ENCODE measurements at regions of chr17 and their contacts with region 1.

Region 1: DNA sequence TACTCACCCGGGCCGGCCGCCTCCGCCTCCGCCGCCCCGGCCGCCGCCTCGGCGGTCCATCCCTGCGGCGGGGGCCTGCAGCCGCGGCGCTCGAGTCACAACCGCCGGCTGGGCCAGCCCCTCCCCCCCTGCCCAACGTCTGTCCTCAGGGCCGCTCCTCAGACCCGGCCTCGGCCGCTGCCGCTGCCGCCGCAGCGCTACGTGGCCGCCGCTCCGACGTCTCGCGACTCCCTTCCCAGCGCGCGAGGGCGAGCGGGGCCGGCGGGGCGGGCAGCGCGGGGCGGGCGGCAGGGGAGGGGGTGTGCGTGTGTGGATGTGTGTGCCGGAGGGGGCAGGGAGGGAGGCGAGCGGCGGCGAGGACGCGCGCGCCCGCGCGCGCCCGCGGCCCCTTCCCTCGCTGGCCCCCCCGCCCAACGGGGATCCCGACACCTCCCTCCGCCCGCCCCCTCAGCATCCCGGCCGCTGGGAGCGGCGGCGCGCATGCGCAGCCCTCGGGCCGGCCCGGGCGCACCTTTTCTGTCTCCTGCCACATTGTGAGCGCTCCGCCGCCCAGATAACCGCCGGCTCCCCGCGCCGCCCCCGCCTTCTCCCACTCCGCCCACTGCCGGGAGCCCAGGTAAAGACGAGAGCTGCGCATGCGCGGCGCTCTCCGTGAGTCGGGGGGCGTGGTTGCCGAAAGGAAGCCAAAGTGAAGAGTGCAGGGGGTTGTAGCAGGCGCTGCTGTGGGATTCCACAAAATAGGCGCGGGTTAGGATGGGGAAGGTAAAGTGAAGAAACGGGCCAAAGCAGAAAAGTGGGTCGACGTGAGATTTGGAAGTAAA is at the start of gene ZNF652:
- DNase-seq: peak; percentile 98
- ATAC-seq: peak; percentile 69
- H3K4me3 ChIP-seq: peak within 1 kb of the TSS; percentile 79 to 95 (median 89)
- H3K4me3 Mint-ChIP-seq: peak within 1 kb of the TSS; percentile 99
- H3K27ac ChIP-seq: peak within 1 kb of the TSS; percentile 70 to 76
- H3K27ac Mint-ChIP-seq: peak within 1 kb of the TSS; percentile 98
- H3K4me1 ChIP-seq: peaks cover 50% of the 10 kb centered on the region in 2 donors
- H3K4me1 Mint-ChIP-seq: peaks cover 62% of the 10 kb centered on the region
- H3K27me3 ChIP-seq: no peaks in the 10 kb centered on the region
- H3K27me3 Mint-ChIP-seq: no peaks in the 10 kb centered on the region
- CTCF ChIP-seq: no peak
- total RNA-seq, gene ZNF652: 82.4 and 86.2 TPM in 2 replicates

Region 2: DNA sequence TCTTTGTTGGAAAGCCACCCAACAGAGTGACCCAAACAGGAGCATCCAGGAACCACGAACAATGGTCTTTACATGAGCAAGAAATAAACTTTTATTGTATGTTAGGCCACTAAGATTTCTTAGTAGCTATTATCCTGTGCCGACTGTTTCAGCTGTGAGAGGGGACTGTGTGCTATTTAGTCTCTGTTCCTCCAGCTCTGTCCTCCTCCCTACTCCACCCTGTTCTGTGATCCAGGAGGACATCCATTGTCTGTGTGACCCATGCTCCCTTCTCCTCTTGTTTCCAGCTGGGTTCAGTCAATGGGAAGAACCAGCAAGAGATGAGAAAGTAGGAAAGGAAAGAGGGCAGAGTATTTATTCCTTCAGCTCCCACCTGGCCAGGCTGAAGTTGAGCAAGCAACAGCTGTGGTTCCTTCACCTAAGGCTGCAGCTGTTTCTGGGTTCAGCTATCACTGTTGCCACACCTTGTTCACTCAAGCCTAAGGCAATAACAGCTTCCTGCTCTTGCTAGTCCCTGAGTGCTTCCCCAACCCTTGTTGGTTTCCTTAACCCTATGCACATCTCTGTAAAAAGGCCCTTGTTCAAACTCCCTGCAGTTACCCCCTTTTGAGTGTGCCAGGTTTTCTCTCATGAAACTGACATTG is 244.4 kb before region 1 on chr17:
- CTCF ChIA-PET with region 1: no interaction called
- POLR2A ChIA-PET with region 1: no interaction called
- intact Hi-C with region 1: no loop called
- DNase-seq: no peak
- ATAC-seq: no peak
- H3K4me3 ChIP-seq: no peak overlapping the region
- H3K4me3 Mint-ChIP-seq: no peak overlapping the region
- H3K27ac ChIP-seq: no peak overlapping the region
- H3K27ac Mint-ChIP-seq: no peak overlapping the region
- H3K4me1 ChIP-seq: no peaks in the 10 kb centered on the region
- H3K4me1 Mint-ChIP-seq: no peaks in the 10 kb centered on the region
- H3K27me3 ChIP-seq: peaks cover 0 to 22% (median 7%) of the 10 kb centered on the region in 4 experiments
- H3K27me3 Mint-ChIP-seq: peaks cover 55% of the 10 kb centered on the region
- CTCF ChIP-seq: no peak

Region 3: DNA sequence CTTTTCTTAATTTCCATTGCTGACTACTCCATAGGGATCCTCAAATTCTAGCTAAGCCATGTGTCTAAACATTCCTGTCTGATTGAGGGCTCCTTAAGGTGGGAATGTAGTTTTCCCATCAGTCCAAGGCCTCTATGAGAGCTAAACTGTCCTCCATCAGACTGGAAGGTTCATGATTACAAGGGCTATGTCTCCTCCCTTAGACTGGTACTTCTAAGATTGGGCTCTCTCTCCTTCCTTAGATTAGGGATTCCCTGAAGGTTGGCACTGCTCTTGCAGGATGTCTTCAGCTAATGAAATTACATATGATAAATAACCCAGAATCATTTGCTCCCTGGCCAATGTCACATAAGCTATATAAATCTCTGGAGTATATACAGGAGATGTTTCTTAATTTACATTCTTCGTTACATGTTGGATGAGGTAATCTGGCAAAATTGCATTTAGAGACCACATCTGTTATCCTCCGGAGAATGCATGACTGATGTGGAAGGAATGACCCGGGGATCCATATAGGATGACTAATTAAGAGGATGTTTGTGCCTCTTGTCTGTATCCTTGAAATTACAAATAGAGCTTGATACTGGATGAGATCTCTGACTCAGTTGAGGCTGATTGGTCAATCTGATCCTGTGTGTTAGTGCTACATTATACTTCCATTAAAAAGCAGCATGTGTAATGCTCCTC is 215.3 kb before region 1 on chr17:
- CTCF ChIA-PET with region 1: no interaction called
- POLR2A ChIA-PET with region 1: no interaction called
- intact Hi-C with region 1: no loop called
- DNase-seq: no peak
- ATAC-seq: no peak
- H3K4me3 ChIP-seq: no peak overlapping the region
- H3K4me3 Mint-ChIP-seq: no peak overlapping the region
- H3K27ac ChIP-seq: no peak overlapping the region
- H3K27ac Mint-ChIP-seq: no peak overlapping the region
- H3K4me1 ChIP-seq: no peaks in the 10 kb centered on the region
- H3K4me1 Mint-ChIP-seq: no peaks in the 10 kb centered on the region
- H3K27me3 ChIP-seq: peaks cover 0 to 12% (median 4%) of the 10 kb centered on the region in 4 experiments
- H3K27me3 Mint-ChIP-seq: peaks cover 28% of the 10 kb centered on the region
- CTCF ChIP-seq: no peak

Region 4: GRCh38 chr17:49343273-49343672 is 18.8 kb before region 1 on chr17:
- CTCF ChIA-PET with region 1: interaction called, 7 read pairs
- POLR2A ChIA-PET with region 1: interaction called, 15 read pairs
- intact Hi-C with region 1: loop called (anchors 1 kb)
- DNase-seq: peak; percentile 30
- ATAC-seq: peak; percentile 24
- H3K4me3 ChIP-seq: no peak overlapping the region
- H3K4me3 Mint-ChIP-seq: peak overlapping the region; percentile 79
- H3K27ac ChIP-seq: peak overlapping the region in 1 of 2 donors; percentile 84
- H3K27ac Mint-ChIP-seq: peak overlapping the region; percentile 47
- H3K4me1 ChIP-seq: peaks cover 31 to 41% of the 10 kb centered on the region in 2 donors
- H3K4me1 Mint-ChIP-seq: peaks cover 54% of the 10 kb centered on the region
- H3K27me3 ChIP-seq: no peaks in the 10 kb centered on the region
- H3K27me3 Mint-ChIP-seq: no peaks in the 10 kb centered on the region
- CTCF ChIP-seq: no peak

Region 5: DNA sequence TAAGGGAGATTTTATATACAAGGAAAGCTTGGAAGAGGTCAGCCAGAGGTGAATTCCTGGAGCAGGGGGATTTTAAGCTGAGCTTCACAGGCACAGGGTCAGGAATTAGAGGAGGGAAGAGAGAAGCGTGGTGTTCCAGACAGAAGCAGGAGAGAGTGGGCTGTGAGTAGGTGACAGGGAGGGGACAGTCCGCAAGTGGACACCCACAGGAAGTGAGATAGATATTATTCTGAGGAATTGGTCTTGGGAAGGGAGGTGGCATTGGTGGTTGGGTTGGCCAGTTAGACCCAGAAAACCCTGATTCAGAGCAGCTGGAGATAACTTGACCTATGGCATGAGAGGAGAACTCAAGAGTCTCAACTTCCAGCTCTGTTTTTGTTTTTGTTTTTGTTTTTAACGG is 37.9 kb after region 1 on chr17:
- CTCF ChIA-PET with region 1: interaction called, 41 read pairs
- POLR2A ChIA-PET with region 1: interaction called, 3 read pairs
- intact Hi-C with region 1: no loop called
- DNase-seq: no peak
- ATAC-seq: no peak
- H3K4me3 ChIP-seq: no peak overlapping the region
- H3K4me3 Mint-ChIP-seq: no peak overlapping the region
- H3K27ac ChIP-seq: no peak overlapping the region
- H3K27ac Mint-ChIP-seq: no peak overlapping the region
- H3K4me1 ChIP-seq: peaks cover 19 to 27% of the 10 kb centered on the region in 2 donors
- H3K4me1 Mint-ChIP-seq: peaks cover 24% of the 10 kb centered on the region
- H3K27me3 ChIP-seq: no peaks in the 10 kb centered on the region
- H3K27me3 Mint-ChIP-seq: no peaks in the 10 kb centered on the region
- CTCF ChIP-seq: no peak

Region 6: GRCh38 chr17:49414622-49415350 is 52.7 kb after region 1 on chr17 and contains the start of gene PHB1:
- CTCF ChIA-PET with region 1: no interaction called
- POLR2A ChIA-PET with region 1: interaction called, 3 read pairs
- intact Hi-C with region 1: loop called (anchors 1 kb)
- DNase-seq: peak; percentile 96
- ATAC-seq: peak; percentile 98
- H3K4me3 ChIP-seq: peak within 1 kb of the TSS; percentile 51 to 93 (median 75)
- H3K4me3 Mint-ChIP-seq: peak within 1 kb of the TSS; percentile 94
- H3K27ac ChIP-seq: peak within 1 kb of the TSS in 1 of 2 donors; percentile 72
- H3K27ac Mint-ChIP-seq: peak within 1 kb of the TSS; percentile 84
- H3K4me1 ChIP-seq: peaks cover 7 to 17% of the 10 kb centered on the region in 2 donors
- H3K4me1 Mint-ChIP-seq: peaks cover 22% of the 10 kb centered on the region
- H3K27me3 ChIP-seq: no peaks in the 10 kb centered on the region
- H3K27me3 Mint-ChIP-seq: no peaks in the 10 kb centered on the region
- CTCF ChIP-seq: no peak
- total RNA-seq, gene PHB1: 72.3 and 73.6 TPM in 2 replicates

Measured in B cell (primary cell).